ENCODE measurements at regions of chr9 and their contacts with region 1.

Region 1: GRCh38 chr9:19028835-19029451 is 4.1 kb downstream of the SAXO1 start:
- DNase-seq: no peak
- ATAC-seq: peak; percentile 83
- H3K4me3 ChIP-seq: no peak overlapping the region
- H3K27ac ChIP-seq: no peak overlapping the region
- H3K4me1 ChIP-seq: no peaks in the 10 kb centered on the region
- H3K27me3 ChIP-seq: no peaks in the 10 kb centered on the region
- CTCF ChIP-seq: peak; percentile 81

Region 2: GRCh38 chr9:18255158-18255629 is 773.7 kb before region 1 on chr9:
- intact Hi-C with region 1: loop called (anchors 10 kb)
- DNase-seq: peak; percentile 81
- ATAC-seq: peak; percentile 95
- H3K4me3 ChIP-seq: no peak overlapping the region
- H3K27ac ChIP-seq: no peak overlapping the region
- H3K4me1 ChIP-seq: no peaks in the 10 kb centered on the region
- H3K27me3 ChIP-seq: no peaks in the 10 kb centered on the region
- CTCF ChIP-seq: peak; percentile 96

Region 3: DNA sequence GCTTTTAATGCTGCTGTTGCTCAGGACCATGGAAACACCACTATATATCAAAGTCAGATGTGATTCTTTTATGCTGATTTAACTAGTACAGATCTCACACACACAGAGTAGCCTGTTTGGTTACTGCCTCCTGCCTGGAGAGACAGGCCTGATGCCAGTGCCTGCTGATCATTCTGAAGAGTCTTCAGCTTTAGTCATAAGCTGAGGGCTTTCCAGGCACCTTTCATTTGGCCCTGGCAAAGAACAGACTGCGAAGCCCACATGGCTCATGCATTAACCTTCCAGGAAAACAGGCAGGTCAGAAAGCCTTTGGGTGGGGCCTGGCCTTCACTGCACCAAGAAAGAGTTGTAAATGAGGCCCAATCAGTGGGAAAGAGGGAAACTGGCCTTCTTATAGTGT is 140.7 kb before region 1 on chr9:
- intact Hi-C with region 1: no loop called
- DNase-seq: no peak
- ATAC-seq: no peak
- H3K4me3 ChIP-seq: no peak overlapping the region
- H3K27ac ChIP-seq: no peak overlapping the region
- H3K4me1 ChIP-seq: no peaks in the 10 kb centered on the region
- H3K27me3 ChIP-seq: no peaks in the 10 kb centered on the region
- CTCF ChIP-seq: no peak

Measured in upper lobe of right lung (tissue), 1 donor.